ENCODE measurements at regions of chr3 and their contacts with region 1.

Region 1: DNA sequence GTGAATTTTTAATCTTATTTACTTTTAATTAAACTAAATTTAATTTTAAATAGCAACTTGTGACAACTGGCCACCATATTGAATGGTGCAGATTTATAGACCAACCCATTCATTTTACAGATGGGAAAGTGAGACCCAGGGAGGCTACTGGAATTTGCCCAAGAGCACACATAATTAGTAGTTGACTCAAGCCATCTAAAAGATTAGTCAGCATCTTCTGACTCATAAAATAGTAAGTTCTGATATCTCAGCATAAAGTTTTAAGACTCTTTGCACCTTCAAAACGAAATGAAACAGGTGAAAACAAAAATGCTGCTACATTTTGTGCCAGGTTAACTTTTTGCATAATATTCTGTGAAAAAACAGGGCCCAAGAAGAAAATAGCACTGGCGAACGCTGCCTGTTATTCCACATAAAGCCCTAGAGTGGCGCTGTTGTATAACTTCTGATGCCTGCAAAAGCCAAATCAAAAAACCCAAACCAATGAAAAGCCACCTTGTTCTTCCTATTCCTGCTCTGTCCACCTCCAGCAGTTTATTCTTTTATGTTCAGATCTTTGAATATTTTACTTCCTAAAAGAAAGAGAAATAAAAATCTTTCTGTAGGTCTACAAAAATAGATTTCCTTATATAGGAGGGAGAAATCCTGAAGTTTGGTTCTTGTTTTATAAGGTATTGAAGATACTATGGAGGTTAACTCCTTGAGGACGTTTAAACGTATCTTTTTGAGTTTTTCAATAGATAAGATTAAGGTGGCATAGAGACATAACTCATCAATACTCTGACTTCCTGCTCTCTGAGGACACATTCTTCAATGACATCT is 62.8 kb downstream of the OTOL1 start:
- DNase-seq: peak; percentile 75
- ATAC-seq: peak; percentile 49
- H3K4me3 ChIP-seq: peak overlapping the region; percentile 58
- H3K27ac ChIP-seq: no peak overlapping the region
- H3K4me1 ChIP-seq: peaks cover 34% of the 10 kb centered on the region
- H3K27me3 ChIP-seq: no peaks in the 10 kb centered on the region
- CTCF ChIP-seq: peak; percentile 96

Region 2: DNA sequence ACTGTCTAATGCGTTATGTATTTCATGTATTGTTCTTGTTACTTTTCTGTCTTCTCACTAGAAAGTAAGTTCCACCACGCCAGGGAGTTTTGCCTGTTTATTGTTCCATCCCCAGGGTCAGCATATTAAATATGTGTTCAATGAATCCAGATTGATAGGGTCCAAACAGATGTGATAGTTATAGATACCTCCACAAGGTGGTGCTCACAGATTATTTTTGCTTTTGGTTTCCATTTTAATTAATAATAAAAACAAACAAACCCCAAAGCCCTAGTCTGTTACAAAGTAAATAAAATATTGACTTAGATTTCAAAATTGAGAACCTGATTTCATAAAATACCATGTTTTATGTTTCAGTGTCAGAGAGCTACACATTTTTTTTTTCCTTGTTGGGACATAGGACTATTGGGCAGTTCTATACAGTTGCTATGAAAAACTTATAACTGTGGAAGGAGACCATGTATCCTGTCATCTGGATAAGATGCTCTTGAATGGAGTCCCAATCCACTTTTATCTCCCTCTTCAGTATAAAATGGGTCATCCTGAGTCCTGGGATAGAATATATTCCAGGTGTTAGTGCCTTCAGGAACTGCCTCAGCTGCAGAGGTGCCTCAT is 50.4 kb before region 1 on chr3:
- CTCF ChIA-PET with region 1: no interaction called
- POLR2A ChIA-PET with region 1: no interaction called
- intact Hi-C with region 1: loop called (anchors 1 kb)
- DNase-seq: peak; percentile 62
- ATAC-seq: peak; percentile 80
- H3K4me3 ChIP-seq: no peak overlapping the region
- H3K27ac ChIP-seq: no peak overlapping the region
- H3K4me1 ChIP-seq: no peaks in the 10 kb centered on the region
- H3K27me3 ChIP-seq: no peaks in the 10 kb centered on the region
- CTCF ChIP-seq: peak; percentile 85

Region 3: GRCh38 chr3:161851941-161852566 is 292.7 kb after region 1 on chr3:
- CTCF ChIA-PET with region 1: no interaction called
- POLR2A ChIA-PET with region 1: no interaction called
- intact Hi-C with region 1: loop called (anchors 1 kb)
- DNase-seq: peak; percentile 87
- ATAC-seq: 0 out of 2 replicates have a peak, but pooled peaks have one; percentile 8
- H3K4me3 ChIP-seq: no peak overlapping the region
- H3K27ac ChIP-seq: no peak overlapping the region
- H3K4me1 ChIP-seq: peaks cover 23% of the 10 kb centered on the region
- H3K27me3 ChIP-seq: no peaks in the 10 kb centered on the region
- CTCF ChIP-seq: peak; percentile 85

Region 4: GRCh38 chr3:162285259-162285658 is 725.9 kb after region 1 on chr3:
- CTCF ChIA-PET with region 1: no interaction called
- POLR2A ChIA-PET with region 1: no interaction called
- intact Hi-C with region 1: loop called (anchors 5 kb)
- DNase-seq: no peak
- ATAC-seq: no peak
- H3K4me3 ChIP-seq: no peak overlapping the region
- H3K27ac ChIP-seq: no peak overlapping the region
- H3K4me1 ChIP-seq: peaks cover 16% of the 10 kb centered on the region
- H3K27me3 ChIP-seq: no peaks in the 10 kb centered on the region
- CTCF ChIP-seq: no peak

Region 5: GRCh38 chr3:162799910-162800309 is 1240.5 kb after region 1 on chr3:
- CTCF ChIA-PET with region 1: no interaction called
- POLR2A ChIA-PET with region 1: no interaction called
- intact Hi-C with region 1: loop called (anchors 1 kb)
- DNase-seq: peak; percentile 10
- ATAC-seq: no peak
- H3K4me3 ChIP-seq: no peak overlapping the region
- H3K27ac ChIP-seq: no peak overlapping the region
- H3K4me1 ChIP-seq: no peaks in the 10 kb centered on the region
- H3K27me3 ChIP-seq: no peaks in the 10 kb centered on the region
- CTCF ChIP-seq: peak; percentile 56

Region 6: GRCh38 chr3:163056874-163057497 is 1497.6 kb after region 1 on chr3:
- CTCF ChIA-PET with region 1: no interaction called
- POLR2A ChIA-PET with region 1: no interaction called
- intact Hi-C with region 1: loop called (anchors 5 kb)
- DNase-seq: peak; percentile 85
- ATAC-seq: peak; percentile 71
- H3K4me3 ChIP-seq: no peak overlapping the region
- H3K27ac ChIP-seq: no peak overlapping the region
- H3K4me1 ChIP-seq: no peaks in the 10 kb centered on the region
- H3K27me3 ChIP-seq: no peaks in the 10 kb centered on the region
- CTCF ChIP-seq: peak; percentile 82